Activated B cell treated with CpG ODN at 0.5 μM for 24 hours (primary cell): ENCODE measurements at regions of chr14 and their contacts with region 1.

Region 1: GRCh38 chr14:23076785-23077408 is 18.0 kb downstream of the ACIN1 start:
- DNase-seq: no peak
- ATAC-seq: peak; percentile 67
- H3K4me3 Mint-ChIP-seq: no peak overlapping the region
- H3K27ac Mint-ChIP-seq: no peak overlapping the region
- H3K4me1 Mint-ChIP-seq: peaks cover 7% of the 10 kb centered on the region
- H3K27me3 Mint-ChIP-seq: no peaks in the 10 kb centered on the region
- CTCF ChIP-seq: no peak

Region 2: GRCh38 chr14:23047034-23047634 is 29.8 kb before region 1 on chr14:
- CTCF ChIA-PET with region 1: no interaction called
- POLR2A ChIA-PET with region 1: no interaction called
- intact Hi-C with region 1: no loop called
- DNase-seq: no peak
- ATAC-seq: no peak
- H3K4me3 Mint-ChIP-seq: no peak overlapping the region
- H3K27ac Mint-ChIP-seq: no peak overlapping the region
- H3K4me1 Mint-ChIP-seq: no peaks in the 10 kb centered on the region
- H3K27me3 Mint-ChIP-seq: peaks cover 4% of the 10 kb centered on the region
- CTCF ChIP-seq: no peak

Region 3: GRCh38 chr14:23186913-23187654 is 110.2 kb after region 1 on chr14:
- CTCF ChIA-PET with region 1: interaction called, 35 read pairs
- POLR2A ChIA-PET with region 1: no interaction called
- intact Hi-C with region 1: loop called (anchors 1 kb)
- DNase-seq: no peak
- ATAC-seq: peak; percentile 45
- H3K4me3 Mint-ChIP-seq: no peak overlapping the region
- H3K27ac Mint-ChIP-seq: no peak overlapping the region
- H3K4me1 Mint-ChIP-seq: no peaks in the 10 kb centered on the region
- H3K27me3 Mint-ChIP-seq: peaks cover 2% of the 10 kb centered on the region
- CTCF ChIP-seq: no peak

Region 4: GRCh38 chr14:23294734-23295561 is 218.1 kb after region 1 on chr14:
- CTCF ChIA-PET with region 1: no interaction called
- POLR2A ChIA-PET with region 1: no interaction called
- intact Hi-C with region 1: loop called (anchors 5 kb)
- DNase-seq: peak; percentile 30
- ATAC-seq: peak; percentile 88
- H3K4me3 Mint-ChIP-seq: no peak overlapping the region
- H3K27ac Mint-ChIP-seq: no peak overlapping the region
- H3K4me1 Mint-ChIP-seq: peaks cover 15% of the 10 kb centered on the region
- H3K27me3 Mint-ChIP-seq: no peaks in the 10 kb centered on the region
- CTCF ChIP-seq: no peak